OCI-LY7 (cell line): ENCODE measurements at regions of chr14 and their contacts with region 1.

Region 1: GRCh38 chr14:23068476-23069412 is 11.4 kb upstream of the CDH24 start:
- DNase-seq: peak; percentile 87
- H3K4me3 ChIP-seq: no peak overlapping the region
- H3K27ac ChIP-seq: peak overlapping the region; percentile 25
- H3K4me1 ChIP-seq: peaks cover 29% of the 10 kb centered on the region
- CTCF ChIP-seq: peak; percentile 100

Region 2: GRCh38 chr14:23095196-23096108 is 26.7 kb after region 1 on chr14 and contains the start of gene C14orf119:
- CTCF ChIA-PET with region 1: interaction called, 12 read pairs
- POLR2A ChIA-PET with region 1: interaction called, 11 read pairs
- intact Hi-C with region 1: loop called (anchors 2 kb)
- DNase-seq: peak; percentile 100
- H3K4me3 ChIP-seq: peak within 1 kb of the TSS; percentile 92
- H3K27ac ChIP-seq: peak within 1 kb of the TSS; percentile 81
- H3K4me1 ChIP-seq: peaks cover 23% of the 10 kb centered on the region
- CTCF ChIP-seq: no peak
- total RNA-seq, gene C14orf119: 25.9 and 44.5 TPM in 2 replicates

Region 3: DNA sequence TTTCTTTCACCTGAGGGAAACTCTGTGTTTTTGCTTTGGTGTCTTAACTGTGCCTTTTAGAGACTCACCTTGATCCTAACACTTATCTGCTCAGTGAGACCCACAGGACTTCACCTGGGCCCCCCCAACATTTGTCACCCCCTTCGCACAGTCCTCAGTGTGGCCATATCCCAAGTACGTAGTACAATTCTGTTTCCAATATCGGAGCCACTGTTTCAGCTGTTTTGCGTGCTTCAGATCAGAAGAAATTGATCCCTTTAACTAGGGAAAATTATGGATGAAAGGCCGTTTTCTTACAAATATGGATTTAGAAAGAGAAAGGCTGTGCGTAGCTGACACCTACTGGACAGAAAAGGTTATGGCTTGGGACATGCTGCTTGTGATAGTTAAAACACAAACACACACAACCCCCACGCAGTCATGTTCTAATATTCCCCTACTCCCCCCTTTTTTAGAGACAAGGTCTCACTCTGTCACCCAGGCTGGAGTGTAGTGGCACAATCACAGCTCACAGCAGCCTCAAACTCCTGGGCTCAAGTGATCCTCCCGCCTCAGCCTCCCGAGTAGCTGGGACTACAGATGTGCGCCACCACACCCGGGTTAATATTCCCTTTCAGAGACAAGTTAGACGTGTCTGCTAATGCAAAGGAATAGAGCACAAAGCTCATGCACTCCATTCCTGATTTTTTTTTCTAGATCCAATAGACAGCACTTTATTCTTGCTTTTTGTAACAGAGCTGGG is 118.3 kb after region 1 on chr14:
- CTCF ChIA-PET with region 1: interaction called, 5 read pairs
- POLR2A ChIA-PET with region 1: interaction called, 3 read pairs
- intact Hi-C with region 1: loop called (anchors 1 kb)
- DNase-seq: peak; percentile 65
- H3K4me3 ChIP-seq: no peak overlapping the region
- H3K27ac ChIP-seq: no peak overlapping the region
- H3K4me1 ChIP-seq: peaks cover 16% of the 10 kb centered on the region
- CTCF ChIP-seq: peak; percentile 92